CD14-positive monocyte (primary cell): ENCODE measurements at regions of chr1 and their contacts with region 1.

Region 1: GRCh38 chr1:153352523-153352922 is 3.9 kb upstream of the PGLYRP4 start:
- DNase-seq: peak; percentile 64 to 81 (median 73)
- H3K4me3 ChIP-seq: no peak overlapping the region
- H3K4me3 Mint-ChIP-seq: no peak overlapping the region
- H3K27ac ChIP-seq: no peak overlapping the region
- H3K27ac Mint-ChIP-seq: no peak overlapping the region
- H3K4me1 ChIP-seq: peaks cover 37 to 45% of the 10 kb centered on the region in 2 donors
- H3K4me1 Mint-ChIP-seq: peaks cover 41% of the 10 kb centered on the region
- H3K27me3 ChIP-seq: no peaks in the 10 kb centered on the region
- H3K27me3 Mint-ChIP-seq: peaks cover 6 to 9% (median 8%) of the 10 kb centered on the region in 3 donors
- CTCF ChIP-seq: peak; percentile 97

Region 2: DNA sequence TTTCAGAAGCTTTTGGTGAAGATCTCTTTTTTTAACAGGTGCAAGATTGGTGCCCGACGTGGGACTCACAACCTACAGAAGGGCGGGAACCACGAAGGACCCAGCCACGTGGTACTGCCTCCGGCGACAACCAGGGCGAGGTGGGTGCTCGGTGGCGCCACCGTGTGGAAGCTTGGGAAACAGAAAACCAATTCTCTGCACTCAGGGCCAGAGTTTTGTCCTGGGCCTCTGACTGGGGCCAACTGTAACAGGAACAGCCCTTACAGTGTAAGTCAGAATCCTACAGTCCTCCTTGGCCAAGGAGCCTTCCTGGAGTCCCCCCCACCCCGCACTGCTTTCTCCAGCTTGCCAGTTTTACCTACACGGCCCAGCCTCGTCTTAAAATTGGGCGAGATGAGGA is 52.2 kb after region 1 on chr1:
- intact Hi-C with region 1: loop called (anchors 1 to 2 kb)
- DNase-seq: peak; percentile 68 to 79 (median 72)
- H3K4me3 ChIP-seq: no peak overlapping the region
- H3K4me3 Mint-ChIP-seq: peak overlapping the region in 1 of 2 donors; percentile 30
- H3K27ac ChIP-seq: no peak overlapping the region
- H3K27ac Mint-ChIP-seq: peak overlapping the region in 5 of 7 donors; percentile 8 to 67 (median 44)
- H3K4me1 ChIP-seq: peaks cover 39 to 42% of the 10 kb centered on the region in 2 donors
- H3K4me1 Mint-ChIP-seq: peaks cover 46% of the 10 kb centered on the region
- H3K27me3 ChIP-seq: no peaks in the 10 kb centered on the region
- H3K27me3 Mint-ChIP-seq: peaks cover 14 to 21% (median 20%) of the 10 kb centered on the region in 3 donors
- CTCF ChIP-seq: peak; percentile 86